Naive thymus-derived CD4-positive, alpha-beta T cell (primary cell): ENCODE measurements at regions of chr20 and their contacts with region 1.

Region 1: DNA sequence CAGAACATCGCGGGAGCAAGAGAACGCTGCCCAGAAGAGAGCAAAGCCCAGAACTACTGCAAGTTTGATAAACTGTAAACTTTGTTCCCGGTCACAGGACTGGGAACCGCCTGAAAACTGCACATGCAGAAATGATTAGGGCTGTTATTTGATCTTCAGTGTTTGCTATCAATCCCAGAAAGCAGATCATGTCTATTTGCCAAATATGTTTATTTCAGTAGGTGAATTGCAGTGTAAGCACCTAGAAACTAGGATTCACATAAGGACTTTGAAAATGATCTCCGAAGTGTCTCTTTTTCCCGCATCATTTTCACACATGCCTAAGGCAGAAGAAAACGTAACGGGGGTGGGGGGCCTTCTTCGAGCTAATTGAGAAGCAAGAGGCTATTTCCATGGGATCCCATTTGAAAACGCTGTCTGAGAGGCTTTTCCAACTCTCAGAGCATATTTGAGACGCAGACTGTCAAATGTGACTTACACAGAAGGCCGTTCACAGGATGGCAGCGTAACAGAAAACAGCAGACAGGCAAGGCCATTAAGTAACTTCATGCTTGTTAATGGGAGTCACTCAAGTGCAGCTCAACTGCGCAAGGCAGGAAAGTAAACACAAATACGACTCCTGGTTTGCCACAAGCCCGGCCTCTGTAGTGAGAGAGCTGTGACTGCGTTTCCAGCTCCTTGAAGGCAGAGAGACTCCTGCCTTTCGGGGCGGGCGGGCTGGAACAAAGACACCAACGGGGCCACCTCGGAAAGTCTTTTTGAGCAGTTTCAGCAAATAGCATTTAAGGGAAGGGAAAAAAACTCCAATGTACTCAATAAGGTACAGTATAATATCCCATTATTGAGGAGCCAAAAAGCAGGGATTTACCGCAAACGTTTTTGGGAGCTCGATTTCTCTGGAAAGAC is 144.7 kb upstream of the ZNF217 start:
- DNase-seq: no peak
- ATAC-seq: no peak
- H3K4me3 ChIP-seq: no peak overlapping the region
- H3K4me3 Mint-ChIP-seq: peak overlapping the region in 1 of 10 donors; percentile 70
- H3K27ac ChIP-seq: no peak overlapping the region
- H3K27ac Mint-ChIP-seq: peak overlapping the region in 5 of 9 donors; percentile 8 to 87 (median 43)
- H3K4me1 ChIP-seq: peaks cover 0 to 14% of the 10 kb centered on the region in 2 donors
- H3K4me1 Mint-ChIP-seq: peaks cover 28 to 68% (median 50%) of the 10 kb centered on the region in 7 donors
- H3K27me3 ChIP-seq: no peaks in the 10 kb centered on the region
- H3K27me3 Mint-ChIP-seq: no peaks in the 10 kb centered on the region

Region 2: GRCh38 chr20:53718142-53719021 is 19.9 kb before region 1 on chr20:
- CTCF ChIA-PET with region 1: no interaction called
- POLR2A ChIA-PET with region 1: interaction called, 3 read pairs
- intact Hi-C with region 1: loop called in 1 of 2 experiments (anchors 2 kb)
- DNase-seq: no peak
- ATAC-seq: no peak
- H3K4me3 ChIP-seq: no peak overlapping the region
- H3K4me3 Mint-ChIP-seq: no peak overlapping the region
- H3K27ac ChIP-seq: no peak overlapping the region
- H3K27ac Mint-ChIP-seq: peak overlapping the region in 1 of 9 donors; percentile 2
- H3K4me1 ChIP-seq: peaks cover 0 to 3% of the 10 kb centered on the region in 2 donors
- H3K4me1 Mint-ChIP-seq: peaks cover 9 to 25% (median 13%) of the 10 kb centered on the region in 7 donors
- H3K27me3 ChIP-seq: no peaks in the 10 kb centered on the region
- H3K27me3 Mint-ChIP-seq: no peaks in the 10 kb centered on the region

Region 3: DNA sequence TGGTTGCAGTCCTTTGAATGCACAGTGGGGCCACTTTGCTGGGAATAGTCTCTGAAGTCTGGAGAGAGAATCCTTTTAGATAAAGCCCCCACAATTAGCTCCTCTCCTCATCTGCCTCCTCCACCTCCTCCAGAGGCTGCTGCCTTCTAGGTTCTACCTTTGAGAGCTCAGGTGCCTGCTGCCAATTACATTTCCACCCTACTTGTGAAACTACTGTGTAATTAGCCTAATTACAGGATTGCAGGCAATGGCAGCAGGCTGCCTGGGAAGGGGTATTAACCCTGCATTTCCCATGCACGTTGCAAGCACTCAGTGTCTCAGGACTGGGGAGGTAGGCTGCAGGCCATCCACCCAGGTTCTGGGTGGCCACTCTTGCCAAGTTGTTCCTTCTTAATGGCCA is 70.9 kb after region 1 on chr20:
- CTCF ChIA-PET with region 1: no interaction called
- POLR2A ChIA-PET with region 1: interaction called, 10 read pairs
- intact Hi-C with region 1: no loop called
- DNase-seq: no peak
- ATAC-seq: no peak
- H3K4me3 ChIP-seq: no peak overlapping the region
- H3K4me3 Mint-ChIP-seq: no peak overlapping the region
- H3K27ac ChIP-seq: no peak overlapping the region
- H3K27ac Mint-ChIP-seq: no peak overlapping the region
- H3K4me1 ChIP-seq: no peaks in the 10 kb centered on the region
- H3K4me1 Mint-ChIP-seq: peaks cover 4 to 14% (median 10%) of the 10 kb centered on the region in 7 donors
- H3K27me3 ChIP-seq: no peaks in the 10 kb centered on the region
- H3K27me3 Mint-ChIP-seq: no peaks in the 10 kb centered on the region